Posterior cingulate gyrus (tissue), 11 donors: ENCODE measurements at regions of chr7 and their contacts with region 1.

Region 1: GRCh38 chr7:38215735-38216670 is 38.0 kb downstream of the STARD3NL start:
- DNase-seq: peak; percentile 45 to 95 (median 76)

Region 2: GRCh38 chr7:37558320-37559026 is 657.5 kb before region 1 on chr7:
- intact Hi-C with region 1: no loop called
- DNase-seq: no peak

Region 3: DNA sequence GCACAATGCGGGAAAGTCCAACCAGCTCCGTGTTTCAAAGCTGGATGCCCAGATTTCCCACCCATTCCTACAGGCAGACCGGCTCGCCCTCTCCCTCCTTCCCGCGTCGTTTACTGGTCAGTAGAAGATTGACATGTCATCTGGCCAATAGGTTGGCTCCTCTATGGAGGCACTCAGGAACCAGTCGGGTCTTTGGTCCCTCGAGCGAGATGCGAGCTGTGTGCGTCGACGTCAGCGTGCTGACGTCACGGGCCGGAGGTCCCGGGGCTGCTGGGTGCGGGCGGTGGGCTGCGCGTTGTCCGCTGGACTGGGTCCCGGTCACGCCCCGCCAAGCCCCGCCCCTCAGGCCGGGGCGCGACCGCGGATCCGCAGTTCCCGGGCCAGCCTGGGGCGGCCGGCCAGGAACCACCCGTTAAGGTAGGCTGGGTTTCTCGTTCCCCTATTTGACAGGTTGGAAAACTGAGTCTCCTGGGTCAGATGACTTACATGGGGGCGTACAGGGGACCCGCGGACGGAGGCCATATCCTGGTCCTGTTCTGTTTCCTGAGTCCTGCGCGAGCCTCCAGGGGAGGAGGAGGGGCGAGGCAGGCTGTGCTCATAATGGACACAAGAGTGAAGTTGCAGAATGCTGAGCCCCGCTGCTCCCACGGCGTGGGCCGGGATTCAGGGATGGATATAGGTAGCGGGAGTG is 37.9 kb before region 1 on chr7 and contains the start of gene STARD3NL:
- intact Hi-C with region 1: loop called (anchors 5 kb)
- DNase-seq: peak; percentile 88 to 99 (median 96)

Region 4: DNA sequence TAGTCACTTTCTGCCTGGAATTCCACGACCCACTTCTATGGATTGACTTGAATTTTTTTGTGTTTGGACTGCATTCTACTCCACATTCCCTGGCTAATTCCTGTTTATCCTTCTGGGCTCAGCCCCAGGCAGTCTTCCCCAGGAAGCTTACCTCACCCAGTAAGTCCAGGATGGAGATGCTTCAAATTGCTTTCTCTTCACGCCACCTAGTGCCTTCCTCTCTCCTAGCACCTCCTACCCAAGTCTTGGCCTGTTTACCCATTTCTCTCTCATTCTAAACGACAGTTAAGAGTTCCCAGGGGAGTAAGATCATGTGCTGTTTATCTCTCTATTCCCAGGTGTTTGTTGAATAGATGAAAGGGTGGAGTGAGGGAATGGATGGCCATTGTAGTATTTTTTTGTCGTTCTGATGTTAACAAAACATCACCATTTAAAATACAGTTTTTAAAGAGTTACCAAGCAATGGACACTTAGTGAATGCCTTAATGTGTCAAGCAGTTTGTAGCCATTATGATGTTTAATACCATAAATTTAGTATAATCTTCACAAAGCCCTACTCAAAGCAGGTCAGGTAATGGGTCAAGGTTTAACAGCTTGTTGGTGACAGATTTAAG is 102.9 kb after region 1 on chr7:
- intact Hi-C with region 1: loop called (anchors 2 kb)
- DNase-seq: peak in 1 of 10 donors; percentile 27

Region 5: GRCh38 chr7:38335492-38336147 is 119.6 kb after region 1 on chr7:
- intact Hi-C with region 1: loop called (anchors 1 kb)
- DNase-seq: peak; percentile 57 to 97 (median 82)